B cell (primary cell): ENCODE measurements at regions of chr9 and their contacts with region 1.

Region 1: GRCh38 chr9:32579706-32580331 is 6.9 kb upstream of the NDUFB6 start:
- DNase-seq: peak; percentile 78
- ATAC-seq: peak; percentile 71
- H3K4me3 ChIP-seq: no peak overlapping the region
- H3K4me3 Mint-ChIP-seq: no peak overlapping the region
- H3K27ac ChIP-seq: no peak overlapping the region
- H3K27ac Mint-ChIP-seq: no peak overlapping the region
- H3K4me1 ChIP-seq: no peaks in the 10 kb centered on the region
- H3K4me1 Mint-ChIP-seq: no peaks in the 10 kb centered on the region
- H3K27me3 ChIP-seq: peaks cover 0 to 9% (median 4%) of the 10 kb centered on the region in 4 experiments
- H3K27me3 Mint-ChIP-seq: peaks cover 35% of the 10 kb centered on the region
- CTCF ChIP-seq: peak; percentile 99

Region 2: GRCh38 chr9:31950756-31951155 is 629.1 kb before region 1 on chr9:
- CTCF ChIA-PET with region 1: no interaction called
- POLR2A ChIA-PET with region 1: no interaction called
- intact Hi-C with region 1: no loop called
- DNase-seq: no peak
- ATAC-seq: no peak
- H3K4me3 ChIP-seq: no peak overlapping the region
- H3K4me3 Mint-ChIP-seq: no peak overlapping the region
- H3K27ac ChIP-seq: no peak overlapping the region
- H3K27ac Mint-ChIP-seq: no peak overlapping the region
- H3K4me1 ChIP-seq: no peaks in the 10 kb centered on the region
- H3K4me1 Mint-ChIP-seq: no peaks in the 10 kb centered on the region
- H3K27me3 ChIP-seq: no peaks in the 10 kb centered on the region
- H3K27me3 Mint-ChIP-seq: no peaks in the 10 kb centered on the region
- CTCF ChIP-seq: no peak

Region 3: GRCh38 chr9:32069169-32069813 is 510.5 kb before region 1 on chr9:
- CTCF ChIA-PET with region 1: no interaction called
- POLR2A ChIA-PET with region 1: no interaction called
- intact Hi-C with region 1: no loop called
- DNase-seq: no peak
- ATAC-seq: no peak
- H3K4me3 ChIP-seq: no peak overlapping the region
- H3K4me3 Mint-ChIP-seq: no peak overlapping the region
- H3K27ac ChIP-seq: no peak overlapping the region
- H3K27ac Mint-ChIP-seq: no peak overlapping the region
- H3K4me1 ChIP-seq: no peaks in the 10 kb centered on the region
- H3K4me1 Mint-ChIP-seq: no peaks in the 10 kb centered on the region
- H3K27me3 ChIP-seq: no peaks in the 10 kb centered on the region
- H3K27me3 Mint-ChIP-seq: no peaks in the 10 kb centered on the region
- CTCF ChIP-seq: no peak

Region 4: DNA sequence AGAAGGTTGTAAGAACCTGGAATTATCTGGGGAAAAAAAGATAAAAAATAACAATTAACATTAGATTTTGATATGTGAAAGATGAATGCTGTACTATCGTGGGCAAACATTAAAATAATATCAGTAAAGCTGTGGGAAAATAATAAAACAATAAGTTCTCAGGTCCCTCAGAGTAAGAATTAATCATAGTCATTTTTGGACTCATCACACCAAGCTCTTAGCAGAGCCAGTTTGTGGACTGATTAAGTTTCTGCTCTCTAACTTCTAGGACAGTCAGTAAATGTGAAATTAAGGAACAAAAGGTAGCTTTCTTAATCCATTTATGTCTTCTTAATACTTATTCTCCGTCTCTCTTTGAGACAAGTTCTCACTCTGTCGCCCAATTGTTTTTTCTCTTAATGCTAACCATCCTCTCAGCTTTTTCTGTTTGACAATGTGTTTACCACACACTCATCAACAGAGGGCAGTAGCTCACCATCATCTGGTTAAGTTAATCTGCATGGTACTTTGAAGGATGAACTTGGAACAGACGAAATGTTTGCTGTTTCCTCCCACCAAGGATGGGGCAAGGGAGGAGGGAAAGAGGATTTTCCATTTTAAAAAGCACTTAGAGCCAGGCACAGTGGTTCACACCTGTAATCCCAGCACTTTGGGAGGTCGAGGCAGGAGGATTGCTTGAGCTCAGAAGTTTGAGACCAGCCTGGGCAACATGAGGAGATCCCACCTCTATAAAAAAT is 200.7 kb before region 1 on chr9:
- CTCF ChIA-PET with region 1: interaction called, 522 read pairs
- POLR2A ChIA-PET with region 1: interaction called, 4 read pairs
- intact Hi-C with region 1: loop called (anchors 1 kb)
- DNase-seq: peak; percentile 80
- ATAC-seq: peak; percentile 81
- H3K4me3 ChIP-seq: no peak overlapping the region
- H3K4me3 Mint-ChIP-seq: no peak overlapping the region
- H3K27ac ChIP-seq: no peak overlapping the region
- H3K27ac Mint-ChIP-seq: no peak overlapping the region
- H3K4me1 ChIP-seq: peaks cover 6 to 17% of the 10 kb centered on the region in 2 donors
- H3K4me1 Mint-ChIP-seq: peaks cover 13% of the 10 kb centered on the region
- H3K27me3 ChIP-seq: peaks cover 0 to 29% (median 20%) of the 10 kb centered on the region in 4 experiments
- H3K27me3 Mint-ChIP-seq: peaks cover 35% of the 10 kb centered on the region
- CTCF ChIP-seq: peak; percentile 83

Region 5: DNA sequence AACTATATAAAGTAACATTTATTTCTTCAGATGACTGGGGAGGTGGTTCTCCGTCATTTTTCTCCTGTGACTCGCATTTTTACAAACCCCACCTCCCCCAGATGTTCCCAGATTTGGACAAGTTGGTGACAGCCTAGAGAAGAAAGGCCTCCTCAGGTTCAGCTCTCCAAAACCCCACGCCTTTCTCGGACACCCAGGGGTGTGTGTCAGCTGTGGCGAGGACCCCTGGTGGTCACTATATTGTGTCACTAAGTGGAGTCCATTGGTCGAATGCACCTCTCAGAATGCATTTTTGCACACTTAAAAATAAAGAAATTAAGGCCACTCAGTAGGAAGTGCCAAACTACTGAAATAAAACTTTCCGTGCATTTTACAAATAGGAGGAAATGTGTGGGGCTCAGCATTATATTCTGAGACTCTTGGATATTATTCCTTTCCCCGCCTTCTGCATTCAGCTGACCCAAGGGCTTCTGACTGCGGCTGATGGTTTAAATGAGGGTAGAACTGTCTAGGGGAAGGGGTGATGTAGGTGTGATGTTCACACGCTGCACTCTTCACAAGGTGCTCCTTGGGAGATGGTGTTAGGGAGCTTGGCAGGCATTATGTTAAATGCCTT is 147.8 kb before region 1 on chr9:
- CTCF ChIA-PET with region 1: interaction called, 12 read pairs
- POLR2A ChIA-PET with region 1: no interaction called
- intact Hi-C with region 1: no loop called
- DNase-seq: peak; percentile 44
- ATAC-seq: peak; percentile 49
- H3K4me3 ChIP-seq: no peak overlapping the region
- H3K4me3 Mint-ChIP-seq: no peak overlapping the region
- H3K27ac ChIP-seq: no peak overlapping the region
- H3K27ac Mint-ChIP-seq: no peak overlapping the region
- H3K4me1 ChIP-seq: no peaks in the 10 kb centered on the region
- H3K4me1 Mint-ChIP-seq: no peaks in the 10 kb centered on the region
- H3K27me3 ChIP-seq: no peaks in the 10 kb centered on the region
- H3K27me3 Mint-ChIP-seq: no peaks in the 10 kb centered on the region
- CTCF ChIP-seq: peak; percentile 49

Region 6: DNA sequence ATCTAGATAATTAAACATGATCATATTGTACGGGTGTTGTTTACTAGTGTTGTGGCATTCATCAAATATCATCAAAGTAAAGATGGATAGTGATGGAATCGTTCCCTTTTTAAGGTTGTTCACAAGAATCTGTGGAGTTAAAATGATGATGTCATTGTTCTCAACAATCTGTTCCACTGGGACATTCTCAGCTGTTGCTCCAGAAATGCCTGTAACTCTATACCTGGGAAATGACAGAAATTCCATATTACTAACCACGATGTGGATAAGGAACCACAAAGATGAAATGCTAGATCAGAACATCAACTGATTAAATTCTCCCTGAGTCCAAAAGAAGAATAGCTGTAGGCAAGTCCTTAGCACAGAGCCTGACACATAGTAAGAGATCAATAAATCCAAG is 91.8 kb before region 1 on chr9:
- CTCF ChIA-PET with region 1: no interaction called
- POLR2A ChIA-PET with region 1: no interaction called
- intact Hi-C with region 1: no loop called
- DNase-seq: no peak
- ATAC-seq: no peak
- H3K4me3 ChIP-seq: no peak overlapping the region
- H3K4me3 Mint-ChIP-seq: no peak overlapping the region
- H3K27ac ChIP-seq: no peak overlapping the region
- H3K27ac Mint-ChIP-seq: no peak overlapping the region
- H3K4me1 ChIP-seq: no peaks in the 10 kb centered on the region
- H3K4me1 Mint-ChIP-seq: no peaks in the 10 kb centered on the region
- H3K27me3 ChIP-seq: no peaks in the 10 kb centered on the region
- H3K27me3 Mint-ChIP-seq: no peaks in the 10 kb centered on the region
- CTCF ChIP-seq: no peak

Region 7: DNA sequence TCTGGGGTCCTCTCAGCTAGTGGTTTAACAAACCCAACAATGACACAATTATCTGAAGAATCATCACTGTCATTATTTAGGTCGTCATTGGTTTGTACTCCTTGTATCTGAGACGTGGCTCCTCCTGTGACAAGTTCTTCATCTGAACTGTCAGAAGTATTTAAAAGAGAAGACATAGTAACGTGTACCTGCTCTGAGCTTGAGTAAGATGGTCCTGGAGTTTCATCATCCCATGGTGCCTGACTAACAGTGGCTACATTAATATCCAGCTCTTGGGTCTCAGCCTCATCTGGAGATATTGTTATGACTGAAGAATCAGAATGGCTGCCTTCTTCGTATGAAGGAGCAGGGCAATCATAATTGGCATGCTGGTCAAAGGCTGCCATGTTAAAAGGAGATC is 36.8 kb before region 1 on chr9:
- CTCF ChIA-PET with region 1: interaction called, 7 read pairs
- POLR2A ChIA-PET with region 1: no interaction called
- intact Hi-C with region 1: loop called (anchors 5 kb)
- DNase-seq: no peak
- ATAC-seq: no peak
- H3K4me3 ChIP-seq: no peak overlapping the region
- H3K4me3 Mint-ChIP-seq: no peak overlapping the region
- H3K27ac ChIP-seq: no peak overlapping the region
- H3K27ac Mint-ChIP-seq: no peak overlapping the region
- H3K4me1 ChIP-seq: no peaks in the 10 kb centered on the region
- H3K4me1 Mint-ChIP-seq: peaks cover 7% of the 10 kb centered on the region
- H3K27me3 ChIP-seq: no peaks in the 10 kb centered on the region
- H3K27me3 Mint-ChIP-seq: no peaks in the 10 kb centered on the region
- CTCF ChIP-seq: no peak

Region 8: DNA sequence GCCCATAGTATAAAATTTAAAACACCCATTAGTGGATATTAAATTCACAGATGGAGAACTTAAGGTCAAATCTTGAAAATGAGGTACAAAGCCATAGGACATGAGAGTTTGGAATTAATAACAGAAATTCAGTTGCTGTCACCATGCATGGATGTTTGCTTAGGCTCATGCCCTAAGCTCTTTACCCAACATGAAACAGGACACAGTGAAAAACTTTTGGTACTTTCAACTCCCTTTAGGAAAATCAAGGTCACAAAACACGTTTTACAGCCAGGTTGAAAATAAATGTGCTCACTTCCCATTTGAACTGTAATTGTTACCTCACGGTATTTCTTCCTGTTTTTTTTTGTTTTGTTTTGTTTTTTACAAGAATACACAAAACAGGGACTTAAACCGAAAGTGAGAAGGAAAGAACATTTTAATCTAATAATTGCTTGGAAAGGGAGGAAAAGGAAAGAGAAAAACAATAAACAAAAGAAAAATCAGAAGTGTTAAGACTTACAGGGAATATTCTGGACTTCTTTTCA is 21.3 kb before region 1 on chr9:
- CTCF ChIA-PET with region 1: interaction called, 13 read pairs
- POLR2A ChIA-PET with region 1: no interaction called
- intact Hi-C with region 1: no loop called
- DNase-seq: no peak
- ATAC-seq: no peak
- H3K4me3 ChIP-seq: no peak overlapping the region
- H3K4me3 Mint-ChIP-seq: no peak overlapping the region
- H3K27ac ChIP-seq: peak overlapping the region in 1 of 2 donors; percentile 35
- H3K27ac Mint-ChIP-seq: peak overlapping the region; percentile 1
- H3K4me1 ChIP-seq: peaks cover 3 to 4% of the 10 kb centered on the region in 2 donors
- H3K4me1 Mint-ChIP-seq: peaks cover 28% of the 10 kb centered on the region
- H3K27me3 ChIP-seq: no peaks in the 10 kb centered on the region
- H3K27me3 Mint-ChIP-seq: no peaks in the 10 kb centered on the region
- CTCF ChIP-seq: no peak